A549 (cell line): ENCODE measurements at regions of chr1 and their contacts with region 1.

Region 1: GRCh38 chr1:154878371-154879022 is 8.4 kb upstream of the KCNN3 start:
- DNase-seq: peak; percentile 72 to 73
- ATAC-seq: peak; percentile 91 to 97
- H3K4me3 ChIP-seq: no peak overlapping the region
- H3K27ac ChIP-seq: peak overlapping the region; percentile 38 to 45; a peak in 1 of 6 replicates
- H3K4me1 ChIP-seq: peaks cover 17% of the 10 kb centered on the region
- CTCF ChIP-seq: peak; percentile 85
- EP300 ChIP-seq: no peak
- POLR2A ChIP-seq: no peak
- RAD21 ChIP-seq: peak; percentile 93

Region 2: GRCh38 chr1:154533952-154534844 is 344.3 kb before region 1 on chr1:
- CTCF ChIA-PET with region 1: interaction called, 10 read pairs
- POLR2A ChIA-PET with region 1: no interaction called
- DNase-seq: peak; percentile 77
- ATAC-seq: peak; percentile 86 to 89
- H3K4me3 ChIP-seq: no peak overlapping the region
- H3K27ac ChIP-seq: no peak overlapping the region
- H3K4me1 ChIP-seq: no peaks in the 10 kb centered on the region
- CTCF ChIP-seq: peak; percentile 76
- EP300 ChIP-seq: no peak
- POLR2A ChIP-seq: no peak
- RAD21 ChIP-seq: peak; percentile 69 to 72

Region 3: GRCh38 chr1:154663471-154664060 is 214.9 kb before region 1 on chr1:
- CTCF ChIA-PET with region 1: interaction called, 72 read pairs
- POLR2A ChIA-PET with region 1: no interaction called
- DNase-seq: peak; percentile 13 to 16
- ATAC-seq: peak; percentile 66 to 69; a peak in 4 of 6 replicates
- H3K4me3 ChIP-seq: no peak overlapping the region
- H3K27ac ChIP-seq: no peak overlapping the region
- H3K4me1 ChIP-seq: no peaks in the 10 kb centered on the region
- CTCF ChIP-seq: no peak
- EP300 ChIP-seq: no peak
- POLR2A ChIP-seq: no peak
- RAD21 ChIP-seq: no peak

Region 4: GRCh38 chr1:154682254-154682653 is 196.2 kb before region 1 on chr1:
- CTCF ChIA-PET with region 1: interaction called, 11 read pairs
- POLR2A ChIA-PET with region 1: no interaction called
- DNase-seq: no peak
- ATAC-seq: no peak
- H3K4me3 ChIP-seq: no peak overlapping the region
- H3K27ac ChIP-seq: no peak overlapping the region
- H3K4me1 ChIP-seq: no peaks in the 10 kb centered on the region
- CTCF ChIP-seq: no peak
- EP300 ChIP-seq: no peak
- POLR2A ChIP-seq: no peak
- RAD21 ChIP-seq: no peak

Region 5: DNA sequence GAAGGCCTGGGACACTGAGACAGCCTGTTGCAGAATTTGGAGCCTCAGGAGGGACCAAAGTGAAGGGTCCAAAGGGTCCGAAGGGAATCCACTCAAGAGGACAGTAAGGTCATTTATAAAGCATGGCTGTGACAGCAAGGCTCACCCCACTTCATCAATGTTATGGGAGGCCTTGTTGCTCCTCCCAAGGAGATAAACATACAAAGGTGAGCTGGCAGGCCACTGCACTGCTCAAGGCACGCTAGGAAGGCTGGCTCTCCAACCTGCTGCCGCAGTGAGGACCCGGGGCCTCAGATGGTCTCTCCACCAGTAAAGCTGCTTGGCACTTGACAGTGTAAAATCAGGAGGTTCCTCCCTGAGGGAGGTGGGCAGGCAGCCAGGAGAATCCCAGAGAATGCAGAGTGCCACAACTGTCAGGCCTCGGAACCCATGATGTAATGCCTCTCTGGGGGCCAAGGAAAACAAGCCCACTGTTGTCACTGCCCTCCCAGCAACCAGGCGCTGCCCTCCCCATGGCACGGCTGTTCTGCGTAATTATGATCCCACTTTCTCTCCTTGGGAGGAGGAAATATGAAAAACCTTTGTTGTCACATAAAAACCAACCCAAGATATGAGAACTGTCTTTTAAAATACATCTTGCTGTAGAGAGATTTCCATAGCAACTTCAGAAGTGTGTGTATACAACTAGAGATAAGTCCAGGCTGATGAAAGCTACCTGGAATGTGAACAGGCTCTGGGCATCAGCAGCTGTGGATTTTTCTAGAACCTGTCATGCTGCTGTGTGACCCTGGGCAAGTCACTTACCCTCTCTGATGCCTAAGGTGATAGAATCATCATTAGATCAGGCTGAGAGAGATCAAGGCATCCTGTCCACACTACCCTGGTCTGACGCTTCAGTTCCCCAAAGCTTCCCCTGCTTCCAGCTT is 110.9 kb before region 1 on chr1:
- CTCF ChIA-PET with region 1: interaction called, 13 read pairs
- POLR2A ChIA-PET with region 1: no interaction called
- DNase-seq: no peak
- ATAC-seq: no peak
- H3K4me3 ChIP-seq: no peak overlapping the region
- H3K27ac ChIP-seq: no peak overlapping the region
- H3K4me1 ChIP-seq: no peaks in the 10 kb centered on the region
- CTCF ChIP-seq: no peak
- EP300 ChIP-seq: no peak
- POLR2A ChIP-seq: no peak
- RAD21 ChIP-seq: no peak

Region 6: DNA sequence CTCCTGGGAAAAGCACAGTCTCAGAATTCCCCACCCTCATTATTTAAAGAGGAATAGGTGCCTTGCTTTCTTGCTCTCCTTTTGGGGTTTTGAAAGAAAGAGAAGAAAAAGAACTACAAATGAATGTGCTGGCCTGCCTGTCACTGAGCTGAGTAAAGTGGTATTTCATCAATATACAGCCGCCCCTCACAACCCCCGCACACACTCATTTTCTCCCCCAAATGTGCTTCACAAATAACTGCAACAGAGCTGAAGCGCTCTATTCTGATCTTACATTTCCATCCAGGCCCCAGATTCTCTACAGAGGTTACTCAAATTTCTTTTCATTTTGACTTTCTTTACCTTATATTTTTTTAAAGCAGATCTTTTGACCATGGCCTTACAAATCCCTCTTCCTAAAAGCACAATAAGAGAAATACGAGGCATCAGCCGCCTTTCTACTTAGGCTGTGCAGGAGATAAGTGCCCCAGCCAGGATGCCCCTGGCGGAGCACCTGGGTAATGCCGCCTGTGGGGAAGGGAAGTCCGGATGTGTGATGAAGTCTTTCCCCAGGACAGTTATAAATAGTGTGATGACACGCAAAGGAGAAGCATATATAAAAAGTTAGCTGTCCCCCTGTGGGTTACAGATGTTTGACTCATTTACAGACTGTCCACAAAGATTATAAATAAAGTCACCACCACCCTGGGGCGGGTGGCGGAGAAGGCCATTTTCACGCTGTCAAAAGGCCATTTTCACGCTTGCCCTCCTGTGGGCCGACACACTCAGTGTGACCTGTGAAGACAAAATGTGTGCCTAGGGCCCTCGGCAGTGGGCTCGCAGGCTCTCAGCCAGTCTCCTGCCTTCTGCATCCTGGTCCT is 15.0 kb before region 1 on chr1:
- CTCF ChIA-PET with region 1: interaction called, 58 read pairs
- POLR2A ChIA-PET with region 1: no interaction called
- DNase-seq: peak; percentile 72 to 85
- ATAC-seq: peak; percentile 72 to 88
- H3K4me3 ChIP-seq: no peak overlapping the region
- H3K27ac ChIP-seq: no peak overlapping the region
- H3K4me1 ChIP-seq: no peaks in the 10 kb centered on the region
- CTCF ChIP-seq: peak; percentile 41; the same call in 2 of the 3 replicates
- EP300 ChIP-seq: no peak
- POLR2A ChIP-seq: no peak
- RAD21 ChIP-seq: peak in 1 of 2 experiments; percentile 25; a peak in 1 of 5 replicates

Region 7: GRCh38 chr1:155553349-155553748 is 674.9 kb after region 1 on chr1:
- CTCF ChIA-PET with region 1: no interaction called
- POLR2A ChIA-PET with region 1: no interaction called
- DNase-seq: no peak
- ATAC-seq: no peak
- H3K4me3 ChIP-seq: no peak overlapping the region
- H3K27ac ChIP-seq: no peak overlapping the region
- H3K4me1 ChIP-seq: no peaks in the 10 kb centered on the region
- CTCF ChIP-seq: no peak
- EP300 ChIP-seq: no peak
- POLR2A ChIP-seq: no peak
- RAD21 ChIP-seq: no peak